MCF 10A (cell line): ENCODE measurements at regions of chr1 and their contacts with region 1.

Region 1: DNA sequence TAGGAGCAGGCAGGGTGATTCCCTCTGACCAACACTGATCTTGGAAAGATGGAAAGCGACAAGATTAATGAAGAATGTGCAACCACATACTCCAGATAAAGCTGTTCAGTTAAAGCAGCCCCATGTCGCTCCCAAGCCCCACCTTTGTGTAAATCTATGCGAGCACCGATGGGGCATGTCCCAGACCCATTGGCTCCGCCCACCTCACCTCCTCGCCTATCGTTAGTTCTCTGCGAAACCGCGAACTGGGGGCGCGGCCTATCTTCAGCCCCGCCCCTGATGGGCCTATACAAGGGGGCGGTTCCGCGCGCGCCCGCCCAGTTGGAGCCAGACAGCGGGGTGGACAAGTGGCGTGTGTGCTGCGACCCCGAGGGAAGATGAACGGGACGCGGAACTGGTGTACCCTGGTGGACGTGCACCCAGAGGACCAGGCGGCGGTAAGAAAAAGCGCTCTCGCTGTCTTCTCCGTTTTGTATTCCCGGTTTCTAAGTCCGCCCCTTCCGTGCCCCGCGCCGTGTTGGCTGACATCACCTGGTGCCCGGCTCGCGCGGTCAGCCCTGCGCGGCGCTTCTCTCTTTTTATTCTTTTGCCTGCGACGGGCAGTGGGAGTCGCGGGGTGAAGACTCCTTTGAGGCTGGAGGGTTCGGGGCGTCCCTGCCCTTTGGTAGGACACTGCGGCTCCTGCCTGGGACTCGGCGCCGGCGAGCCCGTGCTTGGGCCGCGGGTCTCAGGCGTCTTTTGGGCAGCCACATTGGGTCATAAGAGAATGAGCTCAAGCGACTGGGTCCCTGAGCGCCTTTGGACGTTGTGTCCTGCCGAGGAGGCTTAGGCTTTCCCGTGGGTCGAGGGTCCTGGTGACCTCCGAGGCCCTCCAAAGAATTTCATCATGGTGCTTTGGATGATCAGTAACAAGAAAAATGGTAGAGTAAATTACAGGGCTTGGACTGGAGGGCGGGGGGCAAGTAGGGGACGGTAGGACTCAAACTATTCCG is at the start of gene TUFT1:
- DNase-seq: peak; percentile 97
- H3K4me3 Mint-ChIP-seq: peak within 1 kb of the TSS; percentile 96
- H3K27ac Mint-ChIP-seq: peak within 1 kb of the TSS; percentile 98
- H3K4me1 Mint-ChIP-seq: peaks cover 62% of the 10 kb centered on the region
- H3K27me3 Mint-ChIP-seq: no peaks in the 10 kb centered on the region
- CTCF ChIP-seq: no peak
- total RNA-seq, gene TUFT1: 90.6 and 162 TPM in 2 replicates

Region 2: GRCh38 chr1:151425103-151425502 is 115.2 kb before region 1 on chr1:
- CTCF ChIA-PET with region 1: no interaction called
- POLR2A ChIA-PET with region 1: no interaction called
- intact Hi-C with region 1: no loop called
- DNase-seq: no peak
- H3K4me3 Mint-ChIP-seq: no peak overlapping the region
- H3K27ac Mint-ChIP-seq: no peak overlapping the region
- H3K4me1 Mint-ChIP-seq: no peaks in the 10 kb centered on the region
- H3K27me3 Mint-ChIP-seq: no peaks in the 10 kb centered on the region
- CTCF ChIP-seq: no peak

Region 3: GRCh38 chr1:151459331-151460046 is 80.8 kb before region 1 on chr1 and contains the start of gene POGZ:
- CTCF ChIA-PET with region 1: interaction called, 4 read pairs
- POLR2A ChIA-PET with region 1: interaction called, 42 read pairs
- intact Hi-C with region 1: loop called (anchors 2 kb)
- DNase-seq: peak; percentile 97
- H3K4me3 Mint-ChIP-seq: peak within 1 kb of the TSS; percentile 77
- H3K27ac Mint-ChIP-seq: peak within 1 kb of the TSS; percentile 90
- H3K4me1 Mint-ChIP-seq: peaks cover 4% of the 10 kb centered on the region
- H3K27me3 Mint-ChIP-seq: peaks cover 13% of the 10 kb centered on the region
- CTCF ChIP-seq: no peak
- total RNA-seq, gene POGZ: 92.1 and 92.2 TPM in 2 replicates

Region 4: DNA sequence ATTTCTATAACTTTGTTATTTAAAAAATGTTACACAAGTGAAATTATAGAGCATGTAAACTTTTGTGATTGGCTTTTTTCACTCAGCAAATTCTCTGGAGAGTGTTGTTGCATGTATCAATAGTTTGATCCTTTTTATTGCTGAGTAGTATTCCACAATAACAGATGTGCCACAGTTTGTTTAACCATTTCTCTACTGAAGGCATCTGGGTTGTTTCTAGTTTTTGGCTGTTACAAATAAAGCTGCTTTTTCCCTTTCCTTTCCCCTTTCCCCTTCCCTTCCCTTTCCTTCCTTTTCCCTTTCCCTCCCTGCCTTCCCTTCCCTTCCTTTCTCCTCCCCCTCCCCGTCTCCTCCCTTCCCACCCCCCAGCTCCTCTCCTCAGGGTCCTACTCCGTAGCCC is 15.8 kb after region 1 on chr1:
- CTCF ChIA-PET with region 1: interaction called, 3 read pairs
- POLR2A ChIA-PET with region 1: interaction called, 90 read pairs
- intact Hi-C with region 1: no loop called
- DNase-seq: no peak
- H3K4me3 Mint-ChIP-seq: no peak overlapping the region
- H3K27ac Mint-ChIP-seq: no peak overlapping the region
- H3K4me1 Mint-ChIP-seq: peaks cover 19% of the 10 kb centered on the region
- H3K27me3 Mint-ChIP-seq: no peaks in the 10 kb centered on the region
- CTCF ChIP-seq: no peak

Region 5: DNA sequence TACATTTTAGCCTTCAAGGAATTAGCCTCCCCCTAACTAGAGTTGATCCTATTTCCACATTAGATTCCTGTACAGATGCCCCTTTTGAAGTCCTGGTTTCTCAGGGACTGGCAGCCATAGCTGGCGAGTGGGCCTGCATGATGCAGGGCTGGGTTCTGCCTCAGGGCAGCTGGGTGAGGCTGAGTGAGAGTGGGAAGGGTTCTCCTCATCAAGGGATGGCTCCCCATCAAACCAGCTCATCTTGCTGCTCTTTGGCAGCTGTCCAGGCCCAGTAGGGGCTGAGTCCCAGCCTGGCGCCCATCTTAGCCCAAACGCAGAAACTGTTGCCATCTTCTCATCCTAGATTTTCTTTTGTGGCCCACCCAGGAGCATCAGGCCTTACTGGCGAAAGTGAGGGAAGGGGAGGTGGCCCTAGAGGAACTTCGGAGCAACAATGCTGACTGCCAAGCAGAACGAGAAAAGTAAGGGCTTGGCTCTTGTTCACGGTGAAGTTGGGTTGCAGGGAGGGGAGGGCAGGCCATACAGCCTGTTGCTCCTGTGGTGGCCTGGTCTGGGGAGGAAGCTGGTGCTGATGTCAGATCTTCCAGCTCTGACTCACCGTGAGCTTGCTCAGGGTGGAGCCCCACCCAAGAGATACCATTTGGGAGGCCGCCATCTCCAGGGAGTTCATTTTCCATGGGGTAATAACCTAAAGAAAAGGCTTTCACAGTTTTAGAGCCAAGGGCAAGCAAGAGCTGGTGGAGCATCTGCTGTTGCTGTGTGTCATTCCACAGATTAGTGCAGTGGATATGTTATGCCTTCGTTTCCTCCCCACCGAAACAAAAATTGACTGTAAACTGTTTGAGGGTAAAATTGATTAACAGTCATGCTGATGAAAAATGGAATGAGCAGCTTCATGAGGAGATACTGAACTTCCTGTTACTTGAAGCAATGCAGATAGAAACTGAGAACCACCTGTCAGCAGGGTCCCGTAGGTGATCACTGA is 34.6 kb after region 1 on chr1:
- CTCF ChIA-PET with region 1: interaction called, 4 read pairs
- POLR2A ChIA-PET with region 1: interaction called, 61 read pairs
- intact Hi-C with region 1: loop called (anchors 5 kb)
- DNase-seq: peak; percentile 82
- H3K4me3 Mint-ChIP-seq: no peak overlapping the region
- H3K27ac Mint-ChIP-seq: peak overlapping the region; percentile 52
- H3K4me1 Mint-ChIP-seq: peaks cover 42% of the 10 kb centered on the region
- H3K27me3 Mint-ChIP-seq: no peaks in the 10 kb centered on the region
- CTCF ChIP-seq: no peak

Region 6: DNA sequence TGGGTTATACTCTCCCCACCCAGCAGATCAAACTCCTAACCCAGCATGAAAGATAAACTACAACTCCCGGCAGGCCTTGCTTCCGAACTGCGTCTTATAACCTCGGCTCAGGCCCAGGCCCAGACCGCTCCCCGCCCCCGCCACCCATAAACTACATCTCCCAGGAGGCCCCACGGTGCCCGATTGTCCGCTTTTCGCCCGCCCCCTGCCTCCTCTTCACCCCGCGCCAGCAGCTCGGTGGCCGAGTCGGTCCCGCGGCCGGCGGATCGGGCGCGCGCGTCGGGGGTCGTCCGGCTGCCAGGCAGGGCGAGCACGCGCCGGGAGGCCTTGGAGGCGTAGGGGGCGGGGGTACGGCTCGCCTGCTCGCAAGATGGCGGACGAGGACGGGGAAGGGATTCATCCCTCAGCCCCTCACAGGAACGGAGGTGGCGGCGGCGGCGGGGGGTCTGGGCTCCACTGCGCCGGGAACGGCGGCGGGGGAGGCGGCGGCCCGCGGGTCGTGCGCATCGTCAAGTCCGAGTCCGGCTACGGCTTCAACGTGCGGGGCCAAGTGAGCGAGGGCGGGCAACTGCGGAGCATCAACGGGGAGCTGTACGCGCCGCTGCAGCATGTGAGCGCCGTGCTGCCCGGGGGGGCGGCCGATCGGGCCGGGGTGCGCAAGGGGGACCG is 71.7 kb after region 1 on chr1 and contains the start of gene SNX27:
- CTCF ChIA-PET with region 1: interaction called, 5 read pairs
- POLR2A ChIA-PET with region 1: interaction called, 15 read pairs
- intact Hi-C with region 1: no loop called
- DNase-seq: peak; percentile 96
- H3K4me3 Mint-ChIP-seq: peak within 1 kb of the TSS; percentile 89
- H3K27ac Mint-ChIP-seq: peak within 1 kb of the TSS; percentile 88
- H3K4me1 Mint-ChIP-seq: peaks cover 60% of the 10 kb centered on the region
- H3K27me3 Mint-ChIP-seq: no peaks in the 10 kb centered on the region
- CTCF ChIP-seq: no peak
- total RNA-seq, gene SNX27: 36.9 and 43.1 TPM in 2 replicates

Region 7: DNA sequence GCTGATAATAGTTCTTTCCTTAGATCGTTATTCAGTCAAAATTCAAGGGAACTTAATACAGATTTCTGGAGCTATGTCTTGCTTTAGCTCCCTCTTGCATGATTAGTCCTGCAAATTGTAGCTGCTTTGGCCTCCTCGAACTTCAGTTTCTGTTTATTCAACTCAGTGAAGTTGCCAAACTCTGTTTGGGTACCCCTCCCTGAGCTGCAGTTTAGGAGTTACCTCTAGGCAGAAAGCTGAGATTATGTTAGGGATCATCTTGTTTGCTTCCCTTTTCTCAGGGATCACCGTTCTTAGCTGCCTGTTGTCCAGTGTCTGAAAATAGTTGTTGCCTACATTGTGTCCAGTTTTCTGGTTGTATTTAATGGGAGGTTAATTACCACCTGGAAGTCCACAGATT is 115.1 kb after region 1 on chr1:
- CTCF ChIA-PET with region 1: no interaction called
- POLR2A ChIA-PET with region 1: no interaction called
- intact Hi-C with region 1: no loop called
- DNase-seq: no peak
- H3K4me3 Mint-ChIP-seq: no peak overlapping the region
- H3K27ac Mint-ChIP-seq: no peak overlapping the region
- H3K4me1 Mint-ChIP-seq: peaks cover 12% of the 10 kb centered on the region
- H3K27me3 Mint-ChIP-seq: no peaks in the 10 kb centered on the region
- CTCF ChIP-seq: no peak

Region 8: GRCh38 chr1:151953409-151954094 is 413.3 kb after region 1 on chr1:
- CTCF ChIA-PET with region 1: no interaction called
- POLR2A ChIA-PET with region 1: no interaction called
- intact Hi-C with region 1: no loop called
- DNase-seq: no peak
- H3K4me3 Mint-ChIP-seq: no peak overlapping the region
- H3K27ac Mint-ChIP-seq: no peak overlapping the region
- H3K4me1 Mint-ChIP-seq: peaks cover 6% of the 10 kb centered on the region
- H3K27me3 Mint-ChIP-seq: no peaks in the 10 kb centered on the region
- CTCF ChIP-seq: no peak